GM12878 (cell line): ENCODE measurements at regions of chr6 and their contacts with region 1.

Region 1: DNA sequence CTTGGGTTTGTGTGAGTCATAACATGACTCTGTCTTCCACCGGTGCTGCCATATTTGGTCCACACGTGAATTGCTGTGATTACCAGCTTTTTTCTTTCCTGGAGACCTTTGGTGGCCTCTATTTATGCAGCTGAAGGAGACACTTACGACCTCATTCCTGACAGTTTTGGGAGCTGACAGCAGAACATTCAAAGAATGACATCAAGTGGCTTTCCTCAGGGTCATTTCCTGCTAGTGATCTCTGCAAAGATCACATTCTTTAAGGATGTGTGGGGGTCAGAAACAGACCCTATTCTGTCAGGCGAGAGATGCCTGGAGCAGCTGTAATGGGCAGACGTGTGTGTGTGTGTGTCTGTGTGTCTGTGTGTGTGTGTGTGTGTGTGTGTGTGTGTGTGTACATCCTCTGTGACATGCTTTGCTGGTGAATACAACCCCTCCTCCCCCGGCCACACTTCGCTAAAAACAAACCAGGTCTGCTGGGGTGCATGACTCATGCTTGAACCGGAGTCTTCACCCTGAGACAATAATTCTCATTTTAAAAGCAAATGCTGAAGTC is 115.6 kb downstream of the TMEM170B start:
- DNase-seq: no peak
- ATAC-seq: peak; percentile 80
- H3K4me3 ChIP-seq: no peak overlapping the region
- H3K27ac ChIP-seq: no peak overlapping the region
- H3K4me1 ChIP-seq: peaks cover 17% of the 10 kb centered on the region
- H3K27me3 ChIP-seq: no peaks in the 10 kb centered on the region
- CTCF ChIP-seq: no peak
- EP300 ChIP-seq: no peak
- POLR2A ChIP-seq: no peak
- RAD21 ChIP-seq: no peak

Region 2: DNA sequence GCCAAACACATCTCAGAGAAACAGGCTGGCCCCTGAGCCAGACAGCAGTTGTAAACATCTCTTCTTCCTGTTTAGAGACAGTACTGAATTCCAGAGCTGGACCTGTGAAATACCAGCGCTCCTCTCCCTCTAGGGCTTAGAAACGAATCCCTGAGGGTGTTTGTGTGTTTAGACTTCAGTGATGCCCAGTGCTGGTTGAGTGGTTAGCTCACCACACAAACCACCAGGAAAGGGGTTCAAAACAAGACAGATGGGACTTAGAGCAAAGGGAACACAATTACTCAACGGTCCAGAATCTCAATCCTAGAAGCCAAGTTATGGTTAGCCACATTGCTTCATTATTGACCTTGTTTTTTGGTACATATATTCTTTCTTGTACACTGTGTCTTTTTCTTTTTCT is 224.2 kb before region 1 on chr6:
- CTCF ChIA-PET with region 1: no interaction called
- POLR2A ChIA-PET with region 1: no interaction called
- RAD21 ChIA-PET with region 1: no interaction called
- SMC1A ChIA-PET with region 1: no interaction called
- in situ Hi-C with region 1: no loop called
- intact Hi-C with region 1: no loop called
- DNase-seq: peak; percentile 83
- ATAC-seq: peak; percentile 81
- H3K4me3 ChIP-seq: no peak overlapping the region
- H3K27ac ChIP-seq: peak overlapping the region; percentile 51; the same call in 1 of the 2 replicates
- H3K4me1 ChIP-seq: peaks cover 33% of the 10 kb centered on the region
- H3K27me3 ChIP-seq: no peaks in the 10 kb centered on the region
- CTCF ChIP-seq: no peak
- EP300 ChIP-seq: peak in 1 of 2 experiments; percentile 65; a peak in 2 of 4 replicates
- POLR2A ChIP-seq: no peak
- RAD21 ChIP-seq: no peak

Region 3: GRCh38 chr6:11595903-11596302 is 57.2 kb before region 1 on chr6:
- CTCF ChIA-PET with region 1: interaction called, 6 read pairs
- POLR2A ChIA-PET with region 1: no interaction called
- RAD21 ChIA-PET with region 1: interaction called, 9 read pairs
- SMC1A ChIA-PET with region 1: interaction called, 10 read pairs
- in situ Hi-C with region 1: no loop called
- intact Hi-C with region 1: no loop called
- DNase-seq: no peak
- ATAC-seq: peak; percentile 37; the same call in 2 of the 3 replicates
- H3K4me3 ChIP-seq: no peak overlapping the region
- H3K27ac ChIP-seq: no peak overlapping the region
- H3K4me1 ChIP-seq: no peaks in the 10 kb centered on the region
- H3K27me3 ChIP-seq: 0 out of 4 replicates have a peak, but pooled peaks cover 0 to 2% of the 10 kb centered on the region in 2 experiments
- CTCF ChIP-seq: peak in 2 of 3 experiments; percentile 20; a peak in 2 of 6 replicates
- EP300 ChIP-seq: no peak
- POLR2A ChIP-seq: no peak
- RAD21 ChIP-seq: no peak

Region 4: DNA sequence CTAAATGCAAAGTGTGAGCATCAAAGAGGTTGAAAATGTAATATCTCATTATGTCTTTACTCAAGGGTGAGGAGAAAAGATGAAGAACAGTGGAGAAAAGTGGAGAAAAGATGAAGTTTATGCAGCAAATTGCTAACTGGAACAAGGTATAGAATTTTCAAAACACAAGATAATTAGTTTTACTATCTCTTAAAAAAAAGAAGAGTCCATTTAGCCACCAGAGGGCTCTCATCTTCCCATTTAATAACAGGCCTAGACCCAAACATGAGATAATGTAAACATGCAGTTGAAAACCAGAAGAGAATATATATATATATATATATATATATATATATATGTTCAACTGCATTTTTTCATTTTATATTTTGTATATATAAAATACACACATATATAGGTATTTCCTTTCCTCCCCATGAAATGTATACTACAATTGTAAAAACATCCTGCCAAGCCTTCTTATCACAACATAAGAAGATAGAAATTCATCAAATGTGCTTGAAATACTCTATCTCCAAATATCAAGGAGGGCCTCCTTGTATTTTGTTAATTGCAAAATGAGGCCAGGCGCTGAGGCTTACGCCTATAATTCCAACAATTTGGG is 47.1 kb after region 1 on chr6:
- CTCF ChIA-PET with region 1: interaction called, 9 read pairs
- POLR2A ChIA-PET with region 1: no interaction called
- RAD21 ChIA-PET with region 1: interaction called, 10 read pairs
- SMC1A ChIA-PET with region 1: interaction called, 17 read pairs
- in situ Hi-C with region 1: no loop called
- intact Hi-C with region 1: loop called (anchors 2 kb)
- DNase-seq: no peak
- ATAC-seq: peak; percentile 70
- H3K4me3 ChIP-seq: no peak overlapping the region
- H3K27ac ChIP-seq: no peak overlapping the region
- H3K4me1 ChIP-seq: peaks cover 4% of the 10 kb centered on the region
- H3K27me3 ChIP-seq: no peaks in the 10 kb centered on the region
- CTCF ChIP-seq: peak; percentile 35 to 50 (median 35); a peak in 3 of 6 replicates
- EP300 ChIP-seq: no peak
- POLR2A ChIP-seq: no peak
- RAD21 ChIP-seq: peak; percentile 82

Region 5: GRCh38 chr6:11833626-11834592 is 180.8 kb after region 1 on chr6:
- CTCF ChIA-PET with region 1: interaction called, 4 read pairs
- POLR2A ChIA-PET with region 1: no interaction called
- RAD21 ChIA-PET with region 1: interaction called, 4 read pairs
- SMC1A ChIA-PET with region 1: interaction called, 5 read pairs
- in situ Hi-C with region 1: no loop called
- intact Hi-C with region 1: loop called (anchors 5 kb)
- DNase-seq: peak; percentile 84
- ATAC-seq: peak; percentile 84
- H3K4me3 ChIP-seq: peak overlapping the region; percentile 0; the same call in 1 of the 2 replicates
- H3K27ac ChIP-seq: peak overlapping the region; percentile 95
- H3K4me1 ChIP-seq: peaks cover 45% of the 10 kb centered on the region
- H3K27me3 ChIP-seq: no peaks in the 10 kb centered on the region
- CTCF ChIP-seq: no peak
- EP300 ChIP-seq: peak; percentile 97 to 100
- POLR2A ChIP-seq: peak; percentile 41; the same call in 1 of the 2 replicates
- RAD21 ChIP-seq: peak; percentile 42; the same call in 1 of the 2 replicates

Region 6: GRCh38 chr6:12233693-12234571 is 580.8 kb after region 1 on chr6:
- CTCF ChIA-PET with region 1: interaction called, 50 read pairs
- POLR2A ChIA-PET with region 1: no interaction called
- RAD21 ChIA-PET with region 1: interaction called, 35 read pairs
- SMC1A ChIA-PET with region 1: interaction called, 61 read pairs
- in situ Hi-C with region 1: no loop called
- intact Hi-C with region 1: loop called (anchors 1 kb)
- DNase-seq: peak; percentile 66
- ATAC-seq: peak; percentile 89
- H3K4me3 ChIP-seq: no peak overlapping the region
- H3K27ac ChIP-seq: peak overlapping the region; percentile 65
- H3K4me1 ChIP-seq: peaks cover 22% of the 10 kb centered on the region
- H3K27me3 ChIP-seq: no peaks in the 10 kb centered on the region
- CTCF ChIP-seq: peak; percentile 46 to 64 (median 54); a peak in 5 of 6 replicates
- EP300 ChIP-seq: no peak
- POLR2A ChIP-seq: no peak
- RAD21 ChIP-seq: peak; percentile 73